HEK293 (cell line): ENCODE measurements at regions of chr4 and their contacts with region 1.

Region 1: GRCh38 chr4:183261953-183262775 is 57.9 kb downstream of the CLDN22 start:
- H3K4me3 ChIP-seq: no peak overlapping the region
- H3K27ac ChIP-seq: no peak overlapping the region
- H3K4me1 ChIP-seq: no peaks in the 10 kb centered on the region
- CTCF ChIP-seq: peak; percentile 28; the same call in 1 of the 2 replicates

Region 2: GRCh38 chr4:182938205-182938645 is 323.9 kb before region 1 on chr4:
- CTCF ChIA-PET with region 1: interaction called, 34 read pairs
- POLR2A ChIA-PET with region 1: no interaction called
- H3K4me3 ChIP-seq: no peak overlapping the region
- H3K27ac ChIP-seq: no peak overlapping the region
- H3K4me1 ChIP-seq: no peaks in the 10 kb centered on the region
- CTCF ChIP-seq: peak; percentile 65

Region 3: GRCh38 chr4:183074296-183074990 is 187.7 kb before region 1 on chr4:
- CTCF ChIA-PET with region 1: interaction called, 67 read pairs
- POLR2A ChIA-PET with region 1: no interaction called
- H3K4me3 ChIP-seq: no peak overlapping the region
- H3K27ac ChIP-seq: no peak overlapping the region
- H3K4me1 ChIP-seq: no peaks in the 10 kb centered on the region
- CTCF ChIP-seq: no peak

Region 4: DNA sequence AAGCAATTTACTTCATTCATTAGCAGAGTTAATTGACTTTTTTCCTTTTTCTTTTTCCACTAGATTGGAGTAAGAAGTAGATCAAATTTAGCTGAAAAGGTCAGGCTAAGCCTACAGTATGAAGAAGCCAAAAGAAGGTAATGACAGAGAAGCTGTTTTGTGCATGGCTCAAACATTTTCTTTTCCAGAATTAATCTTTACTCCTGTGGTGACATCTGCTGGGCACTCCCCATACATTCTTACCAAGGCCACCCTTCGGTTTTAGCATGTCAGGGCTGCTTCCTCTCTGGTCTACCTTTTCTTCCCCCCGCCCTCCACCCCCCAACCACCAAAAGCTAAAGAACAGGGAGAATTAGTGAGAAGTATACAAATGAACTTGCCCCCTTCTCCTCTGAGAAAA is 12.3 kb before region 1 on chr4:
- CTCF ChIA-PET with region 1: interaction called, 30 read pairs
- POLR2A ChIA-PET with region 1: no interaction called
- H3K4me3 ChIP-seq: no peak overlapping the region
- H3K27ac ChIP-seq: no peak overlapping the region
- H3K4me1 ChIP-seq: peaks cover 6% of the 10 kb centered on the region
- CTCF ChIP-seq: peak; percentile 30; the same call in 1 of the 2 replicates

Region 5: DNA sequence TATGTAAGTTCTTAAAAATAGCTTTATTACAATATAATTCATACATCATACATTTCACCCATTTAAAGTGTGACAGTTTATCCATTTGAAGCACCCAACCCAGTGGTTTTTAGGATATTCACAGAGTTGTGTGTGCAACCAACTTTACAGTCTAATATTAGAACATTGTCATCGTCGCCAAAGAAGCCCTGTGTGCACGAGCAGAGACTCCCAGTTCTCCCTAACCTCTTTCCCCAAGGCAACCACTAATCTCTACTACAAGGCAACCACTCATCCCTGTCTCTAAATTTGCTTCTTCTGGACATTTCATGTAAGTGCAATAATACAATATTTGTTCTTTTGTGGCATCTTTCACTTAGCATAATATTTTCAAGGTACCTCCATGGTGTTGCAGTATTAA is 10.2 kb after region 1 on chr4:
- CTCF ChIA-PET with region 1: interaction called, 19 read pairs
- POLR2A ChIA-PET with region 1: no interaction called
- H3K4me3 ChIP-seq: no peak overlapping the region
- H3K27ac ChIP-seq: no peak overlapping the region
- H3K4me1 ChIP-seq: no peaks in the 10 kb centered on the region
- CTCF ChIP-seq: no peak

Region 6: GRCh38 chr4:183455431-183456195 is 193.4 kb after region 1 on chr4:
- CTCF ChIA-PET with region 1: no interaction called
- POLR2A ChIA-PET with region 1: no interaction called
- H3K4me3 ChIP-seq: no peak overlapping the region
- H3K27ac ChIP-seq: no peak overlapping the region
- H3K4me1 ChIP-seq: no peaks in the 10 kb centered on the region
- CTCF ChIP-seq: no peak

Region 7: DNA sequence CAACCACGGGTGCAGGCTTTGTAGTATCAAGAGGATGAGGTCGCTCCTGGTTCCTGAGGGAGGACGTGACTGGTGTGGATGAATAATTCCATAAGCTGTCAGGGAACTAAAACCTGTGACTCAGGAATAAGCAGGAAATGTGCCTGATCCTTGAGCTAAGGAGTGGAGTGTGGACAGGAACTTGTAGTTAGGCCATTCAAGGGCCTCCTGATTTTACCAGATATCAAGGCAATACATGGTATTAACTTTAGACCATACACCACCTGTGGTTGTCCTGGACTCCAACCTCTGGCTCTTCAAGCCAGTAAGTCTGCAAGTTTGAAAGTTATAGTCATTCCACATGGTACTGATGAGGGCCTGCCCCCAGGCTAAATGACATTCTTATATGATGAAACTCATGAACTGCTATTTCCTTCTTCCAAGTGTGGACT is 230.6 kb after region 1 on chr4:
- CTCF ChIA-PET with region 1: no interaction called
- POLR2A ChIA-PET with region 1: no interaction called
- H3K4me3 ChIP-seq: no peak overlapping the region
- H3K27ac ChIP-seq: no peak overlapping the region
- H3K4me1 ChIP-seq: no peaks in the 10 kb centered on the region
- CTCF ChIP-seq: no peak